ENCODE measurements at regions of chr10 and their contacts with region 1.

Region 1: GRCh38 chr10:104274762-104275721 is 6.1 kb downstream of the GSTO2 start:
- DNase-seq: peak; percentile 57 to 80
- ATAC-seq: peak; percentile 97
- H3K4me3 ChIP-seq: peak overlapping the region; percentile 35
- H3K27ac ChIP-seq: peak overlapping the region; percentile 29 to 76; a peak in 5 of 6 replicates
- H3K4me1 ChIP-seq: peaks cover 5% of the 10 kb centered on the region; the same call in 1 of the 3 replicates
- CTCF ChIP-seq: peak; percentile 83
- EP300 ChIP-seq: no peak
- POLR2A ChIP-seq: no peak
- RAD21 ChIP-seq: peak; percentile 48 to 71; a peak in 4 of 5 replicates

Region 2: DNA sequence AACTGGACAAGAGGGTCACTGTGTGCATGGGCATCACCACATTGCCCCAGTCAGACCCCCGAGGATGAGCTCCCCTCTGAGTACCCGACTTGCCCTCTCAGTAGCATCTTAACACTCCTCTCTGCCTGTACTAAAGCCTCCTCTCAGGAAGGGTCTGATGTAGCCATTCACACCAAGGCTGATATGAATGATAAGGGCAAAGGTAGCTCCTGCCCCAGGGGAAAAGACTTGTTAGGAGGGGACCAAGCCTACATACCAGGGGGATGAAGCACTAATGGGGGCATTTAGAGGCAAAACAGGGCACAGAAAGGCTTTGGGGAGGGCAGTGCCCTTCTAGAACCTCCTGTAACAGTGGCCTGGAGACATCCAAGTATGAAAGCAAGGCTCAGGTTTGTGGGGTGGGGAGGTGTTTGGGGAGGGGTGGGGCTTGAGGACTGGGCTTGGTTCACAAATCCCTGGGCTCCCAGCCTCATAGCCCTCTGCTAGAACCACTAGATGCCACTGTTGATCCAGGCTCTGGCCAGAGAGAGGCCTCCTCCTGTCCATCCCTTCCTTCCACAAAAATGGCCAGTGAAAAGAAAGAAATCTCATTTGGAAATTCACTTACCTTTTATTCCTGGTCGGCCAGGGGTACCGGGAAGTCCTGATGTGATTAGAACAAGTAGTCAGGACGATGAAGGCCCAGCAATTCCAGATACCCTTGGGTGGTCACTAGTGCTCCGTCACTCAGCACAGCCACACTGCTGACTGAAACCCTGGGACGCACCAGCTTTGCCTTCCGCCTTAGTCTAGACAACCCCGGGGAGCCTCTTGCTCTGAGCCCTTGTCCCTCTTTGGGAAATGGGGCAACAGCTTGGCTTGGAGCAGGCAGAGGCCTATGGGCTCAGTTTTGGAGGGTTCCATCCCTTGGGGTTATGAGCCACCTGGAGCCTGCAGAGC is 229.6 kb before region 1 on chr10:
- CTCF ChIA-PET with region 1: interaction called, 28 read pairs
- POLR2A ChIA-PET with region 1: no interaction called
- DNase-seq: peak; percentile 78 to 86
- ATAC-seq: peak; percentile 87 to 96
- H3K4me3 ChIP-seq: no peak overlapping the region
- H3K27ac ChIP-seq: peak overlapping the region; percentile 48 to 79; a peak in 5 of 6 replicates
- H3K4me1 ChIP-seq: peaks cover 27% of the 10 kb centered on the region
- CTCF ChIP-seq: peak; percentile 93
- EP300 ChIP-seq: no peak
- POLR2A ChIP-seq: no peak
- RAD21 ChIP-seq: peak; percentile 99

Region 3: GRCh38 chr10:104259999-104260774 is 14.9 kb before region 1 on chr10:
- CTCF ChIA-PET with region 1: interaction called, 11 read pairs
- POLR2A ChIA-PET with region 1: interaction called, 5 read pairs
- DNase-seq: no peak
- ATAC-seq: no peak
- H3K4me3 ChIP-seq: no peak overlapping the region
- H3K27ac ChIP-seq: peak overlapping the region in 1 of 2 experiments; percentile 11; a peak in 1 of 6 replicates
- H3K4me1 ChIP-seq: peaks cover 37% of the 10 kb centered on the region
- CTCF ChIP-seq: no peak
- EP300 ChIP-seq: no peak
- POLR2A ChIP-seq: no peak
- RAD21 ChIP-seq: no peak

Region 4: GRCh38 chr10:104300736-104301292 is 25.8 kb after region 1 on chr10:
- CTCF ChIA-PET with region 1: interaction called, 260 read pairs
- POLR2A ChIA-PET with region 1: no interaction called
- DNase-seq: peak; percentile 27 to 59
- ATAC-seq: peak; percentile 63
- H3K4me3 ChIP-seq: no peak overlapping the region
- H3K27ac ChIP-seq: peak overlapping the region in 1 of 2 experiments; percentile 45; a peak in 2 of 6 replicates
- H3K4me1 ChIP-seq: peaks cover 10% of the 10 kb centered on the region; the same call in 1 of the 3 replicates
- CTCF ChIP-seq: no peak
- EP300 ChIP-seq: no peak
- POLR2A ChIP-seq: no peak
- RAD21 ChIP-seq: peak in 1 of 2 experiments; percentile 18; a peak in 1 of 5 replicates

Region 5: DNA sequence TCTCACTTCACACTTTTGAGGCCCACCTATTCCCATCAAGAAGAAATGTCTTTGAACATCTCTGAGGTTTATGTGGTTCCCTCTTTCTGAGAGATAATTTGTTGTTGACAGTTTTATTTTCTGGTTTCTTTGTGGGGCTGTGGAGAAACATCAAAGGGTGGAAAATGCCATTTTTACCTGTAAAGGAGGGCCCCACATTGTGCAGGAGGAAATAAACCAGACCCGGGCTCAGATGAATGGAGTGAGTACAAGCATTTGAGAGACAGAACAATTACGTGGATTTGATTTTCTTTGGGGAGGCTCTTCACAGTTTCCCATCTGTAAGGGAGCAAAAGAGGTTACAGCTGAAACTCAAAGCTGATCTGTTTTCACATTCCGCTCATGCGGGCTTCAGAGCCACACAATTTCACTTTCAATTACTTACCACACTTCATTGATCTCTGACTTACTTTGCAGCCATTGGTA is 33.4 kb after region 1 on chr10:
- CTCF ChIA-PET with region 1: interaction called, 76 read pairs
- POLR2A ChIA-PET with region 1: no interaction called
- DNase-seq: no peak
- ATAC-seq: no peak
- H3K4me3 ChIP-seq: no peak overlapping the region
- H3K27ac ChIP-seq: no peak overlapping the region
- H3K4me1 ChIP-seq: peaks cover 10% of the 10 kb centered on the region; the same call in 1 of the 3 replicates
- CTCF ChIP-seq: no peak
- EP300 ChIP-seq: no peak
- POLR2A ChIP-seq: no peak
- RAD21 ChIP-seq: no peak

Region 6: DNA sequence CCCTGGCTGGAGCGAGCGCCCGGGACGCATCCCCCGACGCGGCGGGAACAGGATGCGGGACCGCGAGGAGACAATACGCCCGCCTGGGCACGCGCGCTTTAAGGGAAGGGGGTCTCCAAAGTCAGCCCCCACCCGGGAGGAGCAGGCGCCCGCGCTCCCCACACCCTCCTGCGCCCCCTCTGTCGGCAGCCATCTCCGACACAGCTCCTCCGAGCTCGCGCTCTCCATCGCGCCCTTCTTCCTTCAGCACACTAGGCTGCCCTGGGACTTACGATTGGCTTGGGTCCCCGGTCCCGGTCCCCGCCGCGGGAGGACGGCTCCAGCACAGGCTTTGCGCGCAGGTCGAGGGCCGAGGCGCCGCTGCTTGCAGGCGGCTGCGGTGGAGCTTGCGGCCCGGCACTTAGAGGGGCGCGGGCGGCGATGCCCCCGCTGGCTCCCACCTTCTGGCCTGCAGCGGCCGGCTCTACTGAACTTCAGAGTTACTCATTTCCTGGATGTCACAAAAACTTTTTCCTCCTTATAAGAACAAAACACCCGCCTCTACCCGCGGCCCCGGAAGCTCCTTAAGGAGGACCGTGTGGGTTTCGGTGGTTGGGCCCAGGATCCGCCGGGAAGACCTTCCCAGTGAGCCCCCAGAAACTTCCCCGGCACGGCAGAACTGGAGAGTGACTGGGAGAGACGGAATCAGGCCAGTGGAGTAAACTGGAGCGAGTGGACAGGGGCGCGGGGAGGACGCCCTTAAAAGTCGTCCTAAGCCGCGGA is 63.1 kb after region 1 on chr10 and contains the start of gene ITPRIP:
- CTCF ChIA-PET with region 1: interaction called, 16 read pairs
- POLR2A ChIA-PET with region 1: interaction called, 6 read pairs
- DNase-seq: peak; percentile 78 to 81
- ATAC-seq: peak; percentile 84 to 87
- H3K4me3 ChIP-seq: peak within 1 kb of the TSS; percentile 67
- H3K27ac ChIP-seq: peak within 1 kb of the TSS; percentile 85 to 93
- H3K4me1 ChIP-seq: peaks cover 40% of the 10 kb centered on the region
- CTCF ChIP-seq: no peak; the same call in 2 of the 3 replicates
- EP300 ChIP-seq: no peak
- POLR2A ChIP-seq: peak; percentile 58
- RAD21 ChIP-seq: no peak
- polyA plus RNA-seq, gene ITPRIP: 14.8 and 17.4 TPM in 2 replicates

Region 7: GRCh38 chr10:104345941-104346340 is 70.9 kb after region 1 on chr10:
- CTCF ChIA-PET with region 1: interaction called, 141 read pairs
- POLR2A ChIA-PET with region 1: interaction called, 3 read pairs
- DNase-seq: no peak
- ATAC-seq: no peak
- H3K4me3 ChIP-seq: no peak overlapping the region
- H3K27ac ChIP-seq: no peak overlapping the region
- H3K4me1 ChIP-seq: peaks cover 11% of the 10 kb centered on the region
- CTCF ChIP-seq: no peak
- EP300 ChIP-seq: no peak
- POLR2A ChIP-seq: no peak
- RAD21 ChIP-seq: no peak